AG04450 (cell line): ENCODE measurements at regions of chr2 and their contacts with region 1.

Region 1: DNA sequence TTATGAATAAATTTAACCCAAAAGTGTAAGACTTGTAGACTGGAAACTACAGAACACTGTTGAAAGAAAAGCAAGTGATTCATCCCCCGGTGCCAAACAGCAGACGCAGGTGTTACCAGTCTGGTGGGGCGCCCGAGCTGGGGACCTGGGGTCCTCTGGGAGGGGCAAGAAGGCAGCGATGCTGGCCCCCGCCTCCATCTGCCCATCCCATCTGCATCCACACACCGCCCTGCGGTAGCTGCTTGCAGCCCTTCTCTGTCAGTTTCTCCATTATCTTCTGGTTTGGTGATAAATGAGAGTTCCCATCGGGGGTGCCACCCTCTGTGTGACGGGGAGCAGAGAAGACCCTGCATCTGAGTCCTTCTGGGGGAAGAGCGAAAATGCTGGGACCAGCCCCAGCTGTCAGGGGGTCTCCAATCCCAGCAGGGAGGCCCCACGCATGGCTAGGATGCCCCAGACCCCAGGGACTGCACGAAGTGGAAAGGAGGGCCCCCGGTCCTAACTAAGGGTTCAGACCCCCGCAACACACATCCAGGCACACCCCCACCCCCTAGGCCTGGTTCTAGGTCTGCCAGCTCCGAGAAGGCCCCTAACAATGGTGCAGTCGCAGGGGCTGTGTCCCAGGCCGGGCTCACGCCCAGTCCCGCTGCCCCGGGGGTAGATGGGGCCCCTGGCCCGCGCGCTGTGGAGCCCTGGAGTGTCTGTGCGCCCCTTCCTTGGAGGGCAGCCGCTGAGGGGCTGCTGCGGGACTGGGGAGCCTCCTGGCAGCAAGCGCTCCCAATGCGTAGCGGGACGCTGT is 686 bp upstream of the RGPD8 start:
- DNase-seq: no peak
- H3K4me3 ChIP-seq: no peak overlapping the region
- H3K27ac ChIP-seq: no peak overlapping the region
- H3K27me3 ChIP-seq: no peaks in the 10 kb centered on the region
- CTCF ChIP-seq: no peak

Region 2: GRCh38 chr2:112254466-112255239 is 179.5 kb before region 1 on chr2 and contains the start of gene ZC3H8:
- CTCF ChIA-PET with region 1: interaction called, 11 read pairs
- POLR2A ChIA-PET with region 1: interaction called, 10 read pairs
- DNase-seq: peak; percentile 47
- H3K4me3 ChIP-seq: peak within 1 kb of the TSS; percentile 74
- H3K27ac ChIP-seq: no peak within 1 kb of the TSS
- H3K27me3 ChIP-seq: no peaks in the 10 kb centered on the region
- CTCF ChIP-seq: no peak
- polyA plus RNA-seq, gene ZC3H8: 2.8 and 4.4 TPM in 2 replicates

Region 3: DNA sequence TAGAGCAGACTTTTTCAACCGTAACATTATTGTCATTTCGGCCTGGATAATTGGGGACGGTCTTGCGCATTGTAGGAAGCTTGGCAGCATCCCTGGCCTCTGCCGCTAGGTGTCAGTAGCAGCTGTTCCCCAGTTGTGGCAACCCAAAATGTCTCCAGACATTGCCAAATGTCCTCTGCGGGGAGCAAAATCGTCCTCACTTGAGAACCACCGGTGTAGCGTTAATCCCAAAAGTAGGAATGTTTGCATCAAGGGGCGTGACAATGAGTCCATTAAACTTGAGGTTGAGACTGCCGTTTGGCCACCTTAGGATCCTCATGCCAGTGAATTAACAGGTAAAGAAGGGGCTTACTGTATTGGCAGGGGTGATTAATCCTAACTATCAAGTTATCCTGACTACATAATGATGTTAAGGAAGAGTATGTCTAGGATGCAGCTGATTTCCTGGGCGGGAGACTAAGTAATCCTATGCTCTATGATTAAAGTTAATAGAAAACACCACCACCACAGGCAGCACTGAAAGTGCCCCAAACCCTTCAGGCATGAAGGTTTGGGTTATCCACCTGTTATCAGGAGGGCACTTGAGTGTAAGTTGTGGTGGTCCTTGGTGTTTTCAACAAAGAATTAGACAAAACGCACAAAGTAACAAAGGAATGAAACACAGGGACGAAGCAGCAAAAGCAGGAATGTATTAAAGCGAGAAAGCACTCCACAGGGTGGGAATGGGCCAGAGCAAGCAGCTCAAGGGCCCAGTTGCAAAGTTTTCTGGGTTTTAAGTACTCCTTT is 174.4 kb before region 1 on chr2:
- CTCF ChIA-PET with region 1: interaction called, 11 read pairs
- POLR2A ChIA-PET with region 1: interaction called, 10 read pairs
- DNase-seq: peak; percentile 50
- H3K4me3 ChIP-seq: no peak overlapping the region
- H3K27ac ChIP-seq: no peak overlapping the region
- H3K27me3 ChIP-seq: peaks cover 5% of the 10 kb centered on the region
- CTCF ChIP-seq: peak; percentile 99

Region 4: GRCh38 chr2:112465382-112465781 is 31.3 kb after region 1 on chr2:
- CTCF ChIA-PET with region 1: no interaction called
- POLR2A ChIA-PET with region 1: no interaction called
- DNase-seq: no peak
- H3K4me3 ChIP-seq: no peak overlapping the region
- H3K27ac ChIP-seq: no peak overlapping the region
- H3K27me3 ChIP-seq: peaks cover 26% of the 10 kb centered on the region
- CTCF ChIP-seq: peak; percentile 40

Region 5: DNA sequence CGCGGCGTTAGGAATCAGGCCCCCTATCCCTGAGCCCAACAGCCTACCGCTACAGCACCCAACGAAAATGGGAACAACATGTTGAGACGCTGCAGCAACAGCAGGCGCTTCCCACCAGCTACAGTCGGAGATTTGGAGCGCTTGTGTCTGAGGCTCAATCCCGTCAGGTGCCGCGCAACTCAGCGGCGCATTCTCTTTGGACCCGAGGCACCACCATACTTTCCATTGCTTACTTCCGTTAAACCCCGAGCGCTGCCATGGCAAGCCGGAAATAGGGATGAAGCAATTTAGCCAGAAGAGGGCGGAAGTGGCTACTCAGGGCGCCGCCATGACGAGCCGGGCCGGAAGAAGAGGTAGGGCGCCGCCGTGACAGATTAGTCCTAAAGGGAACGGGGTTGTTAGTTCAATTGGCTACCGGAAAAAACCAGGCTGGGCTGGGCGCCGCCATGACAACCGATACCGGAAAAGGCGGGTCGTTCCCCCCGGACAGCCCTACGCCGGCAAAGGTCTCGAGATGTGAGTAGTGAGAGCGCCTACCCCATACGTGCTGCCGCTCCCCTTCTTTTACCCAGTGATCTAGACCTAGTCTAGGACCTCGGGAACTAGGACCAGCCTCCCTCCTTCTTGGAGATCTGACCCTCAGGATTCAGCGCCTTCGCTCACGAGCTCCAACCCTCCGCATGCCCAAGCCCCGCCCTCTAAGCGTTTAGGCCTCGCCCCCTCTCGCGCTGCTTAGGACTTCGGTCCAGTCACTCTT is 150.2 kb after region 1 on chr2 and contains the start of gene CHCHD5:
- CTCF ChIA-PET with region 1: interaction called, 13 read pairs
- POLR2A ChIA-PET with region 1: no interaction called
- DNase-seq: peak; percentile 84
- H3K4me3 ChIP-seq: peak within 1 kb of the TSS; percentile 70
- H3K27ac ChIP-seq: peak within 1 kb of the TSS; percentile 97
- H3K27me3 ChIP-seq: no peaks in the 10 kb centered on the region
- CTCF ChIP-seq: peak; percentile 12; the same call in 1 of the 2 replicates
- polyA plus RNA-seq, gene CHCHD5: 8.9 and 15.2 TPM in 2 replicates